Activated CD4-positive, alpha-beta T cell treated with anti-CD3 and anti-CD28 coated beads for 36 hours (primary cell): ENCODE measurements at regions of chr5 and their contacts with region 1.

Region 1: GRCh38 chr5:91311697-91312501 is 71.2 kb downstream of the ARRDC3 start:
- DNase-seq: peak; percentile 77
- ATAC-seq: peak; percentile 77
- H3K4me3 Mint-ChIP-seq: peak overlapping the region; percentile 63
- H3K27ac Mint-ChIP-seq: peak overlapping the region; percentile 82
- H3K4me1 Mint-ChIP-seq: peaks cover 49% of the 10 kb centered on the region
- H3K27me3 Mint-ChIP-seq: no peaks in the 10 kb centered on the region

Region 2: DNA sequence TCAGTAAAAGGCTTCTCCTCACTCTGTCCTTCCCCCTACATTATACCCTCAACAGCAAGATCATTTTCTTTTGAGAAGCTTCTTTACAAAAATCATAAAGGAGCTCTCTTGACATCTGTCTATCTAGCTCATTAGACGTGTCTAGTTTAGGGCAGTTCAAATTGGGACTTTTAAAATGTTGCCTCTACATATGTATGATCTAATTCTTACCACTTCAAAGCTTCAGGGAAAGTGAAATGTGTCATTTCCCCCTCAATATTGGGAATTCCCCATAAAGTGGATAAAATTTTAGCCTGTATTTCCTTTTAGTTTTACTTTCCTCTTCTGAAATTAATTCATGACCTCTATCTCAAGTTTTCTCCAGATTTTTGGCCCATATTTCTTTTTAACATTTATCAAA is 252.5 kb before region 1 on chr5:
- CTCF ChIA-PET with region 1: no interaction called
- POLR2A ChIA-PET with region 1: no interaction called
- intact Hi-C with region 1: loop called in 1 of 2 experiments (anchors 2 kb)
- DNase-seq: no peak
- ATAC-seq: peak; percentile 90
- H3K4me3 Mint-ChIP-seq: no peak overlapping the region
- H3K27ac Mint-ChIP-seq: no peak overlapping the region
- H3K4me1 Mint-ChIP-seq: peaks cover 25% of the 10 kb centered on the region
- H3K27me3 Mint-ChIP-seq: peaks cover 39% of the 10 kb centered on the region

Region 3: GRCh38 chr5:91170266-91170665 is 141.6 kb before region 1 on chr5:
- CTCF ChIA-PET with region 1: no interaction called
- POLR2A ChIA-PET with region 1: no interaction called
- intact Hi-C with region 1: loop called in 1 of 2 experiments (anchors 1 kb)
- DNase-seq: no peak
- ATAC-seq: peak; percentile 96
- H3K4me3 Mint-ChIP-seq: no peak overlapping the region
- H3K27ac Mint-ChIP-seq: peak overlapping the region; percentile 21
- H3K4me1 Mint-ChIP-seq: peaks cover 19% of the 10 kb centered on the region
- H3K27me3 Mint-ChIP-seq: peaks cover 2% of the 10 kb centered on the region

Region 4: GRCh38 chr5:91266184-91266705 is 45.7 kb before region 1 on chr5:
- CTCF ChIA-PET with region 1: interaction called, 4 read pairs
- POLR2A ChIA-PET with region 1: interaction called, 3 read pairs
- intact Hi-C with region 1: loop called in 1 of 2 experiments (anchors 5 kb)
- DNase-seq: no peak
- ATAC-seq: peak; percentile 79
- H3K4me3 Mint-ChIP-seq: no peak overlapping the region
- H3K27ac Mint-ChIP-seq: peak overlapping the region; percentile 6
- H3K4me1 Mint-ChIP-seq: peaks cover 19% of the 10 kb centered on the region
- H3K27me3 Mint-ChIP-seq: no peaks in the 10 kb centered on the region

Region 5: GRCh38 chr5:91301106-91301846 is 10.6 kb before region 1 on chr5:
- CTCF ChIA-PET with region 1: interaction called, 11 read pairs
- POLR2A ChIA-PET with region 1: no interaction called
- intact Hi-C with region 1: no loop called
- DNase-seq: no peak
- ATAC-seq: no peak
- H3K4me3 Mint-ChIP-seq: no peak overlapping the region
- H3K27ac Mint-ChIP-seq: no peak overlapping the region
- H3K4me1 Mint-ChIP-seq: peaks cover 2% of the 10 kb centered on the region
- H3K27me3 Mint-ChIP-seq: no peaks in the 10 kb centered on the region